Caco-2 (cell line): ENCODE measurements at regions of chr14 and their contacts with region 1.

Region 1: GRCh38 chr14:101774006-101774795 is 12.7 kb downstream of the PPP2R5C start:
- DNase-seq: no peak
- H3K4me3 ChIP-seq: no peak overlapping the region
- H3K4me3 Mint-ChIP-seq: no peak overlapping the region
- H3K27ac Mint-ChIP-seq: no peak overlapping the region
- H3K4me1 ChIP-seq: no peaks in the 10 kb centered on the region
- H3K4me1 Mint-ChIP-seq: no peaks in the 10 kb centered on the region
- H3K27me3 ChIP-seq: no peaks in the 10 kb centered on the region
- H3K27me3 Mint-ChIP-seq: no peaks in the 10 kb centered on the region
- CTCF ChIP-seq: no peak

Region 2: GRCh38 chr14:101364503-101365328 is 409.5 kb before region 1 on chr14:
- CTCF ChIA-PET with region 1: no interaction called
- POLR2A ChIA-PET with region 1: no interaction called
- intact Hi-C with region 1: no loop called
- DNase-seq: no peak
- H3K4me3 ChIP-seq: no peak overlapping the region
- H3K4me3 Mint-ChIP-seq: no peak overlapping the region
- H3K27ac Mint-ChIP-seq: no peak overlapping the region
- H3K4me1 ChIP-seq: no peaks in the 10 kb centered on the region
- H3K4me1 Mint-ChIP-seq: no peaks in the 10 kb centered on the region
- H3K27me3 ChIP-seq: no peaks in the 10 kb centered on the region
- H3K27me3 Mint-ChIP-seq: no peaks in the 10 kb centered on the region
- CTCF ChIP-seq: no peak

Region 3: GRCh38 chr14:101520621-101521472 is 253.4 kb before region 1 on chr14:
- CTCF ChIA-PET with region 1: no interaction called
- POLR2A ChIA-PET with region 1: no interaction called
- intact Hi-C with region 1: no loop called
- DNase-seq: no peak
- H3K4me3 ChIP-seq: no peak overlapping the region
- H3K4me3 Mint-ChIP-seq: no peak overlapping the region
- H3K27ac Mint-ChIP-seq: no peak overlapping the region
- H3K4me1 ChIP-seq: no peaks in the 10 kb centered on the region
- H3K4me1 Mint-ChIP-seq: no peaks in the 10 kb centered on the region
- H3K27me3 ChIP-seq: no peaks in the 10 kb centered on the region
- H3K27me3 Mint-ChIP-seq: no peaks in the 10 kb centered on the region
- CTCF ChIP-seq: no peak

Region 4: GRCh38 chr14:101707068-101707842 is 66.9 kb before region 1 on chr14:
- CTCF ChIA-PET with region 1: interaction called, 17 read pairs
- POLR2A ChIA-PET with region 1: no interaction called
- intact Hi-C with region 1: no loop called
- DNase-seq: peak; percentile 50 to 72
- H3K4me3 ChIP-seq: no peak overlapping the region
- H3K4me3 Mint-ChIP-seq: no peak overlapping the region
- H3K27ac Mint-ChIP-seq: no peak overlapping the region
- H3K4me1 ChIP-seq: 0 out of 2 replicates have a peak, but pooled peaks cover 4% of the 10 kb centered on the region
- H3K4me1 Mint-ChIP-seq: no peaks in the 10 kb centered on the region
- H3K27me3 ChIP-seq: no peaks in the 10 kb centered on the region
- H3K27me3 Mint-ChIP-seq: peaks cover 4% of the 10 kb centered on the region
- CTCF ChIP-seq: peak; percentile 60 to 82

Region 5: DNA sequence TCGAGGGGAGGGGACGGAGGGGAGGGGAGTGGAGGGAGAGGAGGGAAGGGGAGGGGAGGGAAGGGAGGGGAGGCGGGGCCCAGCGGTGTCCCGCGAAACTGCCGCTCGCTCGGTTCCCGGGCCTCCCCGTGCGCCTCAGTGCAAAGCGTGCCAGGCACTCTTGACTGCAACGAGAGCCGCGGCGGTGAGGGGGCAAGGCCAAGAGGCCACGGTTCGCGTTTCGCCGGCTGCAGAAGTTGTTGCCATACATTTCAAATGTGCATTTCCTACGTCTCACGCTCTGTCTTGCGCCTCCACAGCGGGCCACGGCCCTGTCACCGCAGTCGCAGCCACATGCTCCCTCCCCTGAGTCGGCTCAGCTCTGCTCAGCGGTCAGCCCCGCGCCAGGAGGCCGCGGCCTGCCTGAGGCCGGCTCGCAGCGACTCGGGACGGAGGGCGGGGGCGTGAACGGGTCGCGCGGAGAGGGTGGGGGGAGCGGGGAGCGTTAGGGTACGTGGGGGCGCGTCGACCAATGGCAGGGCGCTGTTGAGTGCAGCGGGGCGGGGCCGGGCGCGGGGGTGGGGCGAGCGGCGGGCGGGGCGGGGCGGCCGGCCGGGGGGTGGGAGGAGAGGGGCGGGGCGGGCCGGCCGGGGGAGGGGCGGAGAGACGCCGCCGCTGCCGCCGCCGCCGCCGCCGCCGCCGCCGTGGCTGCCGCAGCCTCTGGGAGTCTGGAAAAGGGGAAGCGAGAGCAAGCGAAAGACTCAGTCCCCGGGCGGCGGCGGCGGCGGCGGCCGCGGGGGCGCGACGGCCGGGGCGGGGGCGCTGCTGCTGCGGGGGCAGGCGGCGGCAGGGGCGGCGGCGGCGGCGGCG is 12.9 kb before region 1 on chr14 and contains the start of gene PPP2R5C:
- CTCF ChIA-PET with region 1: interaction called, 13 read pairs
- POLR2A ChIA-PET with region 1: no interaction called
- intact Hi-C with region 1: no loop called
- DNase-seq: peak; percentile 88 to 92
- H3K4me3 ChIP-seq: peak within 1 kb of the TSS; percentile 89
- H3K4me3 Mint-ChIP-seq: peak within 1 kb of the TSS; percentile 76
- H3K27ac Mint-ChIP-seq: no peak within 1 kb of the TSS
- H3K4me1 ChIP-seq: 0 out of 2 replicates have a peak, but pooled peaks cover 3% of the 10 kb centered on the region
- H3K4me1 Mint-ChIP-seq: no peaks in the 10 kb centered on the region
- H3K27me3 ChIP-seq: no peaks in the 10 kb centered on the region
- H3K27me3 Mint-ChIP-seq: peaks cover 12% of the 10 kb centered on the region
- CTCF ChIP-seq: no peak
- total RNA-seq, gene PPP2R5C: 86.8 and 97.5 TPM in 2 replicates

Region 6: DNA sequence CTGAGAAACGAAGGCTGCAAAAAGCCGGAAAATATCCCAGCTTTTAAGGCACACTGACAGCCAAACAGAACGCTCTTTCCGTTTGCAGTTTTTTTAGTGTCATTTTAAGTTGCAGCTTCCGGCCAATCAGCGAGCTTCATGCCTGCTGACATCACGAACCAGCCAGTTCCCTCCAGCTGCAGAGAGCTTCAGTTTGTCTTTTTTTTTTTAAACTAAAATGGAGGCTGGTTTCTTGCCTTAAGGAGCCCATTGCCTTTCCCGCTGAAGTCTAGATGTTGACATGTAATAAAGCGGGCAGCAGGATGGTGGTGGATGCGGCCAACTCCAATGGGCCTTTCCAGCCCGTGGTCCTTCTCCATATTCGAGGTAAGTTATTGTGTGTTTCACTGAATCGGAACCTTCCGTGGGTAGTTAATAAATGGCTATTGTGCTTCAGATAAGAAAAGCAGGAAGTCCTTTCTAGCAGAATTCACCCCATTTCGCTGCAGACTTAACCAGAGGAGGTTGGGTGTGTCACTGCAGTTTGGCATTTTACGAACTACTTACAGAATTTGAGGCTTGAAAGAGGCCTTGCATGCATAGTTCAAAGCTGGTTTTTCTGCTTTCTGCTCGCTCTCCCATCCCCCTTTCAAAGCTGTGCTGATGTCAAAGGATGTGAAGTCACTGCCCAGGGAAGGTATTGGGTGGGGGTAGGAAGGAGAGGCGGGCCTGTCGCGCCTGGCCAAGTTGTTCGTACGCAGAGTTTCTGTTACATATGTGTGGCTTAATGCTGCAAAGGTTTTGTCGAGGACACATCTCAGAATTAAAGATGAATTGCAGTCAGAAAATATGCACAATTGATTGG is 35.7 kb after region 1 on chr14:
- CTCF ChIA-PET with region 1: interaction called, 11 read pairs
- POLR2A ChIA-PET with region 1: interaction called, 6 read pairs
- intact Hi-C with region 1: no loop called
- DNase-seq: peak; percentile 87 to 89
- H3K4me3 ChIP-seq: peak overlapping the region; percentile 40
- H3K4me3 Mint-ChIP-seq: peak overlapping the region; percentile 97
- H3K27ac Mint-ChIP-seq: peak overlapping the region; percentile 99
- H3K4me1 ChIP-seq: peaks cover 12% of the 10 kb centered on the region; the same call in 1 of the 2 replicates
- H3K4me1 Mint-ChIP-seq: peaks cover 5% of the 10 kb centered on the region
- H3K27me3 ChIP-seq: no peaks in the 10 kb centered on the region
- H3K27me3 Mint-ChIP-seq: no peaks in the 10 kb centered on the region
- CTCF ChIP-seq: no peak

Region 7: GRCh38 chr14:101823511-101824120 is 49.4 kb after region 1 on chr14:
- CTCF ChIA-PET with region 1: no interaction called
- POLR2A ChIA-PET with region 1: no interaction called
- intact Hi-C with region 1: no loop called
- DNase-seq: no peak
- H3K4me3 ChIP-seq: no peak overlapping the region
- H3K4me3 Mint-ChIP-seq: no peak overlapping the region
- H3K27ac Mint-ChIP-seq: no peak overlapping the region
- H3K4me1 ChIP-seq: no peaks in the 10 kb centered on the region
- H3K4me1 Mint-ChIP-seq: no peaks in the 10 kb centered on the region
- H3K27me3 ChIP-seq: no peaks in the 10 kb centered on the region
- H3K27me3 Mint-ChIP-seq: no peaks in the 10 kb centered on the region
- CTCF ChIP-seq: no peak

Region 8: GRCh38 chr14:101843665-101844064 is 69.5 kb after region 1 on chr14:
- CTCF ChIA-PET with region 1: interaction called, 3 read pairs
- POLR2A ChIA-PET with region 1: no interaction called
- intact Hi-C with region 1: loop called (anchors 5 kb)
- DNase-seq: no peak
- H3K4me3 ChIP-seq: no peak overlapping the region
- H3K4me3 Mint-ChIP-seq: no peak overlapping the region
- H3K27ac Mint-ChIP-seq: no peak overlapping the region
- H3K4me1 ChIP-seq: no peaks in the 10 kb centered on the region
- H3K4me1 Mint-ChIP-seq: no peaks in the 10 kb centered on the region
- H3K27me3 ChIP-seq: no peaks in the 10 kb centered on the region
- H3K27me3 Mint-ChIP-seq: no peaks in the 10 kb centered on the region
- CTCF ChIP-seq: peak in 1 of 2 experiments; percentile 10

Region 9: DNA sequence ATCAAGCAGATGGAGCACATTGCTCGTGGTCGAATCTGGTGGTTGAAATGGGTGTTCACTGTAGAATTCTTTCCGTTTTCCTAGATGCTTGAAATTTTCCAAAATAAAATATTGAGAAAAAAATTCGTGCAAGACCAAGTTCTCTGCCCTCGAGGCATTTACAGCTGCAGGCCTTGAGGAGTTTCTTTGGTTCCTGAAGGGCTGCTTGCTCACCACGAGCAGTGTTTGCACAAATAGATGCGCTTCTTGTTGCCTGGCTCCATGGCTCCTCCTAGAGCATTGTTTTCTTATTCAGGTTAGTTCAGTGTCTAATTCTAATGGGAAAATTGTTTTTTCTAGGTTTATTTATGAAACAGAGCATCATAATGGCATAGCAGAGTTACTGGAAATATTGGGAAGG is 115.7 kb after region 1 on chr14:
- CTCF ChIA-PET with region 1: interaction called, 5 read pairs
- POLR2A ChIA-PET with region 1: no interaction called
- intact Hi-C with region 1: loop called (anchors 2 kb)
- DNase-seq: peak in 1 of 2 experiments; percentile 5
- H3K4me3 ChIP-seq: no peak overlapping the region
- H3K4me3 Mint-ChIP-seq: no peak overlapping the region
- H3K27ac Mint-ChIP-seq: no peak overlapping the region
- H3K4me1 ChIP-seq: no peaks in the 10 kb centered on the region
- H3K4me1 Mint-ChIP-seq: no peaks in the 10 kb centered on the region
- H3K27me3 ChIP-seq: no peaks in the 10 kb centered on the region
- H3K27me3 Mint-ChIP-seq: no peaks in the 10 kb centered on the region
- CTCF ChIP-seq: no peak